ENCODE measurements at regions of chr3 and their contacts with region 1.

Region 1: DNA sequence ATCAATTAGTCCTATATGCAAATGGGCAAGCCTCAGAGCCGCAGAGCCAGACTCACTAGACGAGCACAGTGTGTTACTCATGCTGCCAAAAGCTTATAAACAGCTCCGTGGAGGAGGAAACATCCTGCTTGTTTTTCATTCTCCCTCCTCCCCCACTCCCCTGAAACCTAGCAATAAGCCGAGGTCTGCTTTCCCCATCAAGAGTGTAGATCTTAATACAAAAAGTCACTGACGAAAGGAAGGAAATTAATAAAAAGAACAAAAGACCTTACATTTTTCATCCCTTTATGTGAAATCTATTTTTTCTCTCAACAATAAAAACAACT is 88.5 kb downstream of the XXYLT1 start:
- DNase-seq: no peak
- ATAC-seq: no peak
- H3K4me3 Mint-ChIP-seq: no peak overlapping the region
- H3K27ac Mint-ChIP-seq: no peak overlapping the region
- H3K4me1 Mint-ChIP-seq: peaks cover 25% of the 10 kb centered on the region
- H3K27me3 Mint-ChIP-seq: peaks cover 2% of the 10 kb centered on the region
- CTCF ChIP-seq: no peak

Region 2: DNA sequence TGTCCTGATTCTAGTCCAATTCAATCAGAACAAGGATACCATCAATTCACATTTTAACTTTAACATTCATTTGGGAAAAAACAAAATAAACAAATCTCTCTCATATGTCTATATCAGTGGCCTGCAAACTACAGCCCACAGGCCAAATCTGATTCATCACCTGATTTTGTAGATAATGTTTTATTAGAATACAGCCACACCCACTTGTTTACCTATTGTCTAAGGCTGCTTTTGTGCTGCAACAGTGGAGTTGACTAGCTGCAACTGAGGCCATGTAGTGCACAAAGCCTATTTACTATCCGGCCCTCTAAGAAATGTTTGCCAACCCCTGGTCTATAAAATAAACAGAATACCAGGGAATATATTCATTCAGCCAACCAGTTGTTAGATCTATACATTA is 1893.2 kb before region 1 on chr3:
- CTCF ChIA-PET with region 1: no interaction called
- POLR2A ChIA-PET with region 1: no interaction called
- intact Hi-C with region 1: no loop called
- DNase-seq: no peak
- ATAC-seq: no peak
- H3K4me3 Mint-ChIP-seq: no peak overlapping the region
- H3K27ac Mint-ChIP-seq: no peak overlapping the region
- H3K4me1 Mint-ChIP-seq: no peaks in the 10 kb centered on the region
- H3K27me3 Mint-ChIP-seq: no peaks in the 10 kb centered on the region
- CTCF ChIP-seq: no peak

Region 3: DNA sequence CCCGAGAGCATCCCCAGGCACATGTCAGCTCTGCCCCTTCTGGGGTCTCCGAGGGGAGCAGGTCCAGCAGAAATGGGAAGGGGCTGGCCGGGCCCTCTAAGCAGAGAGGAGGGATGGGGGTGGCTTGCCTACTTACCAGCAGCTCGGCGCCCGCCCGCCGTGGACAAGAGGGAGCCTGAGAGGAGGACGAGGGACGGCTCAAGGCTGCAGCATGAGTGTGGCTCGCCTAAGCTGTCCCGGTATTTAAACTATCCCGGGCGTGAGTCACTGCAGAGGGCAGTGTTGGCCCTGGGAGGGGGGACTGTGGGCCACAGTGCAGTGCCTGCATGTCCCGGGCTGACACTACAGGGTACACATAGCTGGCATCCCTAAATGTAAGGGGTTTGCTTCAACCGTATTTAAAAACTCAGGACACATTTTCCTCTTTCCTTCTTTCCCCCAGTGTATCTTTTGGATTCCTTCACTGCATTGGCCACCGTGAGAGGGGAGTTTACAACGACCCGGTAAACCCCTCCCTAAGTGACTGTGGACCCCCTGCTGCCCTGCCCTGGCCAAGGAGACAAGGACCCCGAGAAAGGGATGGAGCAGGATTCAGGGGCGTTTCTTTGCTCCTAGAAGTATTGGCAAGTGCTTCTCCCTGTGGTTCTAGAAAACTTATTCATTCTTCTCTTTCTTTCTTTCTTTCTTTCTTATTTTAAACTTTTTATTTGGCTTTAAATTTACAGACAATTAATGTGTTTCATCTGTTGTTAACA is 812.7 kb before region 1 on chr3 and contains the start of gene LRRC15:
- CTCF ChIA-PET with region 1: no interaction called
- POLR2A ChIA-PET with region 1: no interaction called
- intact Hi-C with region 1: no loop called
- DNase-seq: no peak
- ATAC-seq: no peak
- H3K4me3 Mint-ChIP-seq: no peak within 1 kb of the TSS
- H3K27ac Mint-ChIP-seq: no peak within 1 kb of the TSS
- H3K4me1 Mint-ChIP-seq: no peaks in the 10 kb centered on the region
- H3K27me3 Mint-ChIP-seq: peaks cover 37% of the 10 kb centered on the region
- CTCF ChIP-seq: no peak
- total RNA-seq, gene LRRC15: not detected in 2 replicates

Region 4: GRCh38 chr3:195162033-195162669 is 20.3 kb before region 1 on chr3:
- CTCF ChIA-PET with region 1: no interaction called
- POLR2A ChIA-PET with region 1: interaction called, 11 read pairs
- intact Hi-C with region 1: no loop called
- DNase-seq: no peak
- ATAC-seq: peak; percentile 32
- H3K4me3 Mint-ChIP-seq: peak overlapping the region; percentile 48
- H3K27ac Mint-ChIP-seq: peak overlapping the region; percentile 82
- H3K4me1 Mint-ChIP-seq: peaks cover 63% of the 10 kb centered on the region
- H3K27me3 Mint-ChIP-seq: no peaks in the 10 kb centered on the region
- CTCF ChIP-seq: no peak

Measured in activated B cell treated with CpG ODN at 0.5 μM for 24 hours (primary cell).